ENCODE measurements at regions of chr17 and their contacts with region 1.

Region 1: GRCh38 chr17:67862614-67863217 is 37.4 kb downstream of the BPTF start:
- DNase-seq: no peak
- ATAC-seq: no peak
- H3K4me3 Mint-ChIP-seq: no peak overlapping the region
- H3K27ac Mint-ChIP-seq: no peak overlapping the region
- H3K4me1 Mint-ChIP-seq: peaks cover 55% of the 10 kb centered on the region
- H3K27me3 Mint-ChIP-seq: no peaks in the 10 kb centered on the region

Region 2: DNA sequence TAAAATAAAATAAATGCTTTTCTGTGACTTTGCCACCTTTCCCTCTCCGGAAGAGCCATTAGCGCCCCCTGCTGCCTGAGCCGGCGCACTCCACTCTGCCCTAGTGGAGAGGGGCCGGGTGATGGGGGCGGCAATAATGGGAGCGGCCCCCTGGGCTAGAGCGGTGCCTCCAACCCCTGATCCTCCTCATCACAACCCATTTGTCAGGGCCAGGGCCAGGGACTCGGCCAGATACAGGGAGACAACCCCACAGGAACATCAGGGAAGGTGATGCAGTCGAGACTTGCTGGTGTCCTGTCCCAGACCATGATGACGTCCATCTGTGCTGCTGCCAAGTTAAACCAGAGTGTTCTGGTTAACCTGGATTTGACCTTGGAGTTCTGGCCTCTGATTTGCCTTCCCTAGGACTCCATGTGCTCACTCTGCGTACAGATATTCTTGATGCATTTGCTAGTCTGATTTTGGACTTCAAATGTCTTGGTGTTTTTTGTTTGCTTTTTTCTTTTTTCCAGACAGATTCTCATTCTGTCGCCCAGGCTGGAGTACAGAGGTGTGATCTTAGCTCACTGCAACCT is 83.5 kb before region 1 on chr17:
- CTCF ChIA-PET with region 1: no interaction called
- POLR2A ChIA-PET with region 1: no interaction called
- DNase-seq: no peak
- ATAC-seq: peak; percentile 51
- H3K4me3 Mint-ChIP-seq: no peak overlapping the region
- H3K27ac Mint-ChIP-seq: no peak overlapping the region
- H3K4me1 Mint-ChIP-seq: no peaks in the 10 kb centered on the region
- H3K27me3 Mint-ChIP-seq: peaks cover 2% of the 10 kb centered on the region

Region 3: DNA sequence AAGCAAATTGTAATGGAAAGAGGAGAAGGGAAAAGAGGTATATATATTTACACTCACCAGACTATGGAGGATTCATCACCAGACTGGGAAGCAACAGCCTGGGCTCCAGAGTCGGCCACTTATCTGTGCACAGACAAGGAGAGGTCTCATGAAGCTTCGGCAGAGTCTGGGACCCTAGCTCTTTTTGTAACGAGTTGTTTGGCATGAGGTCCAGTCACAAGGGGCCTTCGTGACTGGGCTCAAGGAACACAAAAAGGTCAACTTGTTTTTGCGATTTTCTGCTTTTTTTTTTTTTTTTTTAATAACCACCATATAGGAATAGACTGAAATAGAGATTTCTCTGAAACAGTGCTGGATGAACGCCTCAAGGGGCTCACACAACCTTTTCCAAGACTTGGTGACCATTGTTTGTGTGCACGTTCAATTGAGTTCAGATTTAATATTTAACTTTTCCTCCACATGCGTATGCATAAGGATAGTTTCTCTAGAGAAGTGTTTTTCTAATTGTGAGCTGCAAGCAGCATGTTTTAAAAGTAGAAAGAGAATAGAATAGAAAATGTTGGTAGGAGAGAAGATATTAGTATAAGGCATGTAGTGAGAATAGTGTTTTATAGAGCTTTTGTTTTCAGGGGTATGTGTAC is 11.6 kb before region 1 on chr17:
- CTCF ChIA-PET with region 1: interaction called, 10 read pairs
- POLR2A ChIA-PET with region 1: no interaction called
- DNase-seq: no peak
- ATAC-seq: no peak
- H3K4me3 Mint-ChIP-seq: no peak overlapping the region
- H3K27ac Mint-ChIP-seq: no peak overlapping the region
- H3K4me1 Mint-ChIP-seq: peaks cover 47% of the 10 kb centered on the region
- H3K27me3 Mint-ChIP-seq: no peaks in the 10 kb centered on the region

Region 4: GRCh38 chr17:67884741-67885140 is 22.0 kb after region 1 on chr17:
- CTCF ChIA-PET with region 1: no interaction called
- POLR2A ChIA-PET with region 1: no interaction called
- DNase-seq: no peak
- ATAC-seq: no peak
- H3K4me3 Mint-ChIP-seq: no peak overlapping the region
- H3K27ac Mint-ChIP-seq: no peak overlapping the region
- H3K4me1 Mint-ChIP-seq: peaks cover 5% of the 10 kb centered on the region
- H3K27me3 Mint-ChIP-seq: no peaks in the 10 kb centered on the region

Measured in activated CD8-positive, alpha-beta T cell treated with anti-CD3 and anti-CD28 coated beads, Interleukin-2, amount 10 ng/mL, durations not matched to agents 7 days and 5 days (primary cell).